A673 (cell line): ENCODE measurements at regions of chr6 and their contacts with region 1.

Region 1: DNA sequence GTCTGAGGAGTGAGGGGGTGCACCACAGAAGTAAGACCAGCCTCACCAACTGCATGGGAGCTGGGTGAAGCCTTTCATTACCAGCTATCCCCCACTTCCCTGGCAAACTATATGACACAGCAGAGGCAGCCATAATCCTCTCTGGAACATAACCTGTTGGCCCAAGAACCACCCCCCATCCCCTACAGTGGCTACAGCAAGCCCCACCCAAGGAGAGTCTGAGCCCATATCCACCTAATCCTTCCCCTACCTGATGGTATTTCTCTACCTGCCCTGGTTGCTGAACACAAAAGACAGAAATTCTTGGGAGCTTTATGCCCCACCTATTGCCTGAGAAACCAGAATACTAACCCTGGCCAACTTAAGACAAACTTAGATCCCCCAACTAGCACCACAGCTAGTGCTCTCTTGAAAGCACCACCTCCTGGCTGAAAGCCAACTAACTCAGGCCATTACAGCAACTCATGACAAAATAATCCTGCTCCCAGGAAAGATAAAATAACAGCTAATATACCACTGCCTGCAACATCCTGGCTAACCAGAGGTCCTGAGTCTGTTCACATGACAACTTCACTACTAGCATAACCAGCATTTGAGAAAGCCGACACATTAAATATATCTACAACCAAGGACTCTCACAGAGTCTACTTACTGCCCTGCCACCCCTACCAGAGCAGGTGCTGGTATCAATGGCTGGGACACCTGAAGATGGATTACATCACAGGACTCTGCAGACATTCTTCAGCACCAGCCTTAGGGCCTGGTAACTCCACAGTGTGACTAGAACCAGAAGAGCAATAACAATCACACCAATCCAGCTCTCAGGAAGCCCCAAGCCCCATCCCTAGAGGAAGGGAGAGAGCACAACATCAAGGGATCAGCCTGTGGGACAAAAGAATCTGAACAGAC is 11.1 kb downstream of the RNGTT start:
- DNase-seq: peak; percentile 50
- H3K4me3 ChIP-seq: no peak overlapping the region
- H3K27ac ChIP-seq: no peak overlapping the region
- H3K4me1 ChIP-seq: peaks cover 7% of the 10 kb centered on the region
- H3K27me3 ChIP-seq: no peaks in the 10 kb centered on the region
- CTCF ChIP-seq: no peak

Region 2: GRCh38 chr6:89495961-89496546 is 543.7 kb after region 1 on chr6:
- CTCF ChIA-PET with region 1: no interaction called
- POLR2A ChIA-PET with region 1: interaction called, 10 read pairs
- intact Hi-C with region 1: no loop called
- DNase-seq: no peak
- H3K4me3 ChIP-seq: no peak overlapping the region
- H3K27ac ChIP-seq: no peak overlapping the region
- H3K4me1 ChIP-seq: peaks cover 10% of the 10 kb centered on the region
- H3K27me3 ChIP-seq: no peaks in the 10 kb centered on the region
- CTCF ChIP-seq: no peak